CD4-positive, alpha-beta T cell (primary cell): ENCODE measurements at regions of chr9 and their contacts with region 1.

Region 1: GRCh38 chr9:97632985-97633858 is at the starts of genes NCBP1 and TSTD2:
- DNase-seq: peak; percentile 92 to 99 (median 94)
- ATAC-seq: peak; percentile 82
- H3K4me3 ChIP-seq: peak within 1 kb of the TSS; percentile 72
- H3K4me3 Mint-ChIP-seq: peak within 1 kb of the TSS; percentile 97
- H3K27ac ChIP-seq: peak within 1 kb of the TSS; percentile 95 to 97
- H3K27ac Mint-ChIP-seq: peak within 1 kb of the TSS; percentile 99
- H3K4me1 ChIP-seq: peaks cover 37% of the 10 kb centered on the region
- H3K4me1 Mint-ChIP-seq: peaks cover 73% of the 10 kb centered on the region
- H3K27me3 ChIP-seq: no peaks in the 10 kb centered on the region
- H3K27me3 Mint-ChIP-seq: no peaks in the 10 kb centered on the region
- CTCF ChIP-seq: no peak
- total RNA-seq, gene NCBP1: 50.7 to 53.5 TPM
- total RNA-seq, gene TSTD2: 23.8 to 26.0 TPM

Region 2: DNA sequence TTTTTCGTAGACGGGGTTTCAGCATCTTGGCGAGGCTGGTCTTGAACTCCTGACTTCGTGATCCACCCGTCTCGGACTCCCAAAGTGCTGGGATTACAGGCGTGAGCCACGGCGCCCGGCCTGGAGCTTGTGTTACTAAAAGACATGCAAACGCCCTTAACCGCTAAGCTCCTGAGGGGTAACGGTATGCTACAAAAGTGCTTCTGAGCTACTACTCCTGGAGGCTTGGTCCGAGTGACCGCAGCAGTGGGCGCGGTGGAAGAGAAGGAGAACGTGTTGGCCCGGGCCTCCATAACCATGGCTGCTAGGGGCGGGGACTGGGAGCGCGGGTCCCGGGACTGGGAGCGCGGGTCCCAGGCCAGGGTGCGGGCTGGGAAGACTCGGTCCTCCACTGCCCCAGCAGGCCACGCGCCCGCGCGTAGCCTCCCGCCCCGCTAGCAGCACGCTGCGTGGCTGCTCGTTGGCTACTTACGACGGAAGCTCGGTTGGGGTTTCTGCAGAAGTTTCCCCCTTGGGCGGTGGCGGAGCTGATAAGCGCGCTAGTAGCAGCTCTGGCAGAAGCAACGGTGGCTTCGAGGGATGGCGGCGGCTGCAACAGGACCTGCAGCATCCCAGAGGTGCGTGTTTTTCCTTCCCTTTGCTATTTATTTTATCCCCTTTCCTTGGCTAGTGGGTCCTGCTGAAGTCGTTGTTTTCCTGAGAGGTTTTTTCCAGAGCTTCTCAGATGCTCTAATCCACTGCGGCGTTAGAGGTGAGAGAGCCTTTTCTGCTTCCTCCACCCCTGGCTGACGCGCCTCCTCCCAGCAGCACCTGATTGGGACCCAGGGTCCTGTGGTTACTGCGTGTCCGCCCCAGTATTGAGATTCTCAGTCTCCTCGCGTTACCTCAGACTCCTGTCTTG is 395.0 kb before region 1 on chr9:
- CTCF ChIA-PET with region 1: no interaction called
- POLR2A ChIA-PET with region 1: interaction called, 15 read pairs
- intact Hi-C with region 1: no loop called
- DNase-seq: peak; percentile 54 to 89 (median 71)
- ATAC-seq: peak; percentile 90
- H3K4me3 ChIP-seq: peak overlapping the region; percentile 61
- H3K4me3 Mint-ChIP-seq: peak overlapping the region; percentile 96
- H3K27ac ChIP-seq: peak overlapping the region; percentile 4 to 59
- H3K27ac Mint-ChIP-seq: peak overlapping the region; percentile 91
- H3K4me1 ChIP-seq: peaks cover 13% of the 10 kb centered on the region
- H3K4me1 Mint-ChIP-seq: peaks cover 27% of the 10 kb centered on the region
- H3K27me3 ChIP-seq: no peaks in the 10 kb centered on the region
- H3K27me3 Mint-ChIP-seq: no peaks in the 10 kb centered on the region
- CTCF ChIP-seq: no peak

Region 3: DNA sequence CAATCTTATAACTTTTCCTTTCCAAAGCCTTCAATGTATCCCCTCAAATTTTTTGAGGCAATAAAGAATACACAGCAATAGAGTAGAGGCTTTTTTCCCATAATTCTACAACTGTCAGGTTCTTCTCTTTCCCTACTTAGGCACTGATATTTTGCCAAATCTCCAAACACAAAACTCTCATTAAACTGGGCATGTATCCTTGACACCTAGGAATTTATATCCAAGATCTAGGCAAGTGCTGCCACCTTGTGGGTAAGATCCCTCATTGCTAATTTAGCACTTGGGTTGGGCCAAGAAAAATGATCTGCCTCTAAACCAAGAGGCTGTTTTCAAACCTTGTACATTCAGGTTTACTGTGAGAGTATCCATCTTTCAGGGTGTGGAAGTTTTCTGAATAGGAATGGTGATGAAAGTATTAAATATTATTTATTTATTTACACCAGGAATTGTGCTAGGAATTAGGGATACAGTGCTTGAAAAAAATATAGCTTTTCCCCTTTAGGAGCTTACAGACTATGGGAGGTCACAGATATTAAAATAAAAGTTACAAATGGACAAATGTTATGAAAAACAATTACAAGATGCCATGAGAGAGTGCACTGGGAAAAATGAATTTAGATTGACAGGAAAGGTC is 17.7 kb before region 1 on chr9:
- CTCF ChIA-PET with region 1: interaction called, 5 read pairs
- POLR2A ChIA-PET with region 1: interaction called, 21 read pairs
- intact Hi-C with region 1: no loop called
- DNase-seq: peak; percentile 15 to 76 (median 44)
- ATAC-seq: peak; percentile 65
- H3K4me3 ChIP-seq: no peak overlapping the region
- H3K4me3 Mint-ChIP-seq: no peak overlapping the region
- H3K27ac ChIP-seq: no peak overlapping the region
- H3K27ac Mint-ChIP-seq: no peak overlapping the region
- H3K4me1 ChIP-seq: no peaks in the 10 kb centered on the region
- H3K4me1 Mint-ChIP-seq: no peaks in the 10 kb centered on the region
- H3K27me3 ChIP-seq: no peaks in the 10 kb centered on the region
- H3K27me3 Mint-ChIP-seq: no peaks in the 10 kb centered on the region
- CTCF ChIP-seq: peak; percentile 83

Region 4: GRCh38 chr9:97696803-97697601 is 63.8 kb after region 1 on chr9 and contains the start of gene XPA:
- CTCF ChIA-PET with region 1: interaction called, 6 read pairs
- POLR2A ChIA-PET with region 1: interaction called, 50 read pairs
- intact Hi-C with region 1: loop called in 1 of 2 experiments (anchors 5 kb)
- DNase-seq: peak; percentile 94 to 99 (median 97)
- ATAC-seq: peak; percentile 92
- H3K4me3 ChIP-seq: peak within 1 kb of the TSS; percentile 83
- H3K4me3 Mint-ChIP-seq: peak within 1 kb of the TSS; percentile 87
- H3K27ac ChIP-seq: peak within 1 kb of the TSS; percentile 80 to 81
- H3K27ac Mint-ChIP-seq: peak within 1 kb of the TSS; percentile 86
- H3K4me1 ChIP-seq: peaks cover 26% of the 10 kb centered on the region
- H3K4me1 Mint-ChIP-seq: peaks cover 62% of the 10 kb centered on the region
- H3K27me3 ChIP-seq: no peaks in the 10 kb centered on the region
- H3K27me3 Mint-ChIP-seq: peaks cover 4% of the 10 kb centered on the region
- CTCF ChIP-seq: no peak
- total RNA-seq, gene XPA: 20.2 to 23.3 TPM

Region 5: GRCh38 chr9:97906236-97906831 is 273.1 kb after region 1 on chr9:
- CTCF ChIA-PET with region 1: no interaction called
- POLR2A ChIA-PET with region 1: interaction called, 10 read pairs
- intact Hi-C with region 1: loop called in 1 of 2 experiments (anchors 10 kb)
- DNase-seq: peak in 11 of 14 experiments; percentile 17 to 81 (median 58)
- ATAC-seq: peak; percentile 51
- H3K4me3 ChIP-seq: peak overlapping the region; percentile 44
- H3K4me3 Mint-ChIP-seq: peak overlapping the region; percentile 82
- H3K27ac ChIP-seq: peak overlapping the region; percentile 81 to 86
- H3K27ac Mint-ChIP-seq: peak overlapping the region; percentile 96
- H3K4me1 ChIP-seq: peaks cover 92% of the 10 kb centered on the region
- H3K4me1 Mint-ChIP-seq: peaks cover 94% of the 10 kb centered on the region
- H3K27me3 ChIP-seq: no peaks in the 10 kb centered on the region
- H3K27me3 Mint-ChIP-seq: no peaks in the 10 kb centered on the region
- CTCF ChIP-seq: no peak

Region 6: GRCh38 chr9:98045234-98046179 is 412.3 kb after region 1 on chr9:
- CTCF ChIA-PET with region 1: no interaction called
- POLR2A ChIA-PET with region 1: no interaction called
- intact Hi-C with region 1: no loop called
- DNase-seq: peak in 9 of 14 experiments; percentile 3 to 87 (median 19)
- ATAC-seq: peak; percentile 98
- H3K4me3 ChIP-seq: peak overlapping the region; percentile 50
- H3K4me3 Mint-ChIP-seq: peak overlapping the region; percentile 45
- H3K27ac ChIP-seq: peak overlapping the region in 1 of 2 donors; percentile 61
- H3K27ac Mint-ChIP-seq: peak overlapping the region; percentile 86
- H3K4me1 ChIP-seq: peaks cover 17% of the 10 kb centered on the region
- H3K4me1 Mint-ChIP-seq: peaks cover 30% of the 10 kb centered on the region
- H3K27me3 ChIP-seq: no peaks in the 10 kb centered on the region
- H3K27me3 Mint-ChIP-seq: no peaks in the 10 kb centered on the region
- CTCF ChIP-seq: peak; percentile 18